ENCODE measurements at regions of chr13 and their contacts with region 1.

Region 1: GRCh38 chr13:98565726-98566565 is 11.0 kb downstream of the STK24 start:
- DNase-seq: no peak
- ATAC-seq: no peak
- H3K4me3 ChIP-seq: no peak overlapping the region
- H3K4me3 Mint-ChIP-seq: peak overlapping the region; percentile 77 to 99 (median 84)
- H3K27ac ChIP-seq: peak overlapping the region; percentile 69
- H3K27ac Mint-ChIP-seq: peak overlapping the region; percentile 84 to 97 (median 96)
- H3K4me1 ChIP-seq: peaks cover 50 to 87% of the 10 kb centered on the region in 2 donors
- H3K4me1 Mint-ChIP-seq: peaks cover 67 to 99% (median 93%) of the 10 kb centered on the region in 7 donors
- H3K27me3 ChIP-seq: no peaks in the 10 kb centered on the region
- H3K27me3 Mint-ChIP-seq: no peaks in the 10 kb centered on the region

Region 2: GRCh38 chr13:97432917-97433726 is 1132.8 kb before region 1 on chr13:
- CTCF ChIA-PET with region 1: no interaction called
- POLR2A ChIA-PET with region 1: no interaction called
- intact Hi-C with region 1: loop called in 1 of 2 experiments (anchors 2 kb)
- DNase-seq: peak; percentile 97 to 99 (median 99)
- ATAC-seq: peak; percentile 85
- H3K4me3 ChIP-seq: peak overlapping the region; percentile 93
- H3K4me3 Mint-ChIP-seq: peak overlapping the region; percentile 90 to 99 (median 96)
- H3K27ac ChIP-seq: peak overlapping the region; percentile 100
- H3K27ac Mint-ChIP-seq: peak overlapping the region; percentile 98 to 100 (median 100)
- H3K4me1 ChIP-seq: peaks cover 0 to 8% of the 10 kb centered on the region in 2 donors
- H3K4me1 Mint-ChIP-seq: peaks cover 13 to 36% (median 30%) of the 10 kb centered on the region in 7 donors
- H3K27me3 ChIP-seq: no peaks in the 10 kb centered on the region
- H3K27me3 Mint-ChIP-seq: peaks cover 0 to 11% (median 7%) of the 10 kb centered on the region in 5 donors

Region 3: DNA sequence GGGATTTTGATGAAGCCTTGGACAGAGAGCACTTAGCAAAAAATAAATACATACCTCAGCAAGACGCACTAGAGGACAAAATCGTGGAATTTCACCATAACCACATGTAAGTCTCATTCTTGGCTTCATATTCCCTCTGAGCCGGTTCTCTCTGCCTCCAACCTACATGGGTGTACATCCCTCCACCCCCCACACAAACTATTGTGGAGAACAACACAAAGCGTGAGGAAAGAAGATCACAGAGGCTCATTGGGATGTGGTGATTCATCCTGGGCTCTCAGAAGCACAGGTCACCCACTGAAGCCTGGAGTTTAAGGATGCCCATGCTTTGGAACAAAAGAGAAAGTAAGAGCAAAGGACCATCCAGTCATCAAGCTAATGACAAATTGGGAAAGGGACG is 181.2 kb before region 1 on chr13:
- CTCF ChIA-PET with region 1: no interaction called
- POLR2A ChIA-PET with region 1: no interaction called
- intact Hi-C with region 1: no loop called
- DNase-seq: no peak
- ATAC-seq: no peak
- H3K4me3 ChIP-seq: no peak overlapping the region
- H3K4me3 Mint-ChIP-seq: no peak overlapping the region
- H3K27ac ChIP-seq: no peak overlapping the region
- H3K27ac Mint-ChIP-seq: no peak overlapping the region
- H3K4me1 ChIP-seq: no peaks in the 10 kb centered on the region
- H3K4me1 Mint-ChIP-seq: no peaks in the 10 kb centered on the region
- H3K27me3 ChIP-seq: peaks cover 0 to 2% of the 10 kb centered on the region in 2 donors
- H3K27me3 Mint-ChIP-seq: peaks cover 7 to 15% (median 12%) of the 10 kb centered on the region in 5 donors

Region 4: GRCh38 chr13:98523455-98524102 is 42.4 kb before region 1 on chr13:
- CTCF ChIA-PET with region 1: no interaction called
- POLR2A ChIA-PET with region 1: no interaction called
- intact Hi-C with region 1: loop called in 1 of 2 experiments (anchors 2 kb)
- DNase-seq: no peak
- ATAC-seq: no peak
- H3K4me3 ChIP-seq: no peak overlapping the region
- H3K4me3 Mint-ChIP-seq: peak overlapping the region in 8 of 10 donors; percentile 13 to 53 (median 40)
- H3K27ac ChIP-seq: no peak overlapping the region
- H3K27ac Mint-ChIP-seq: peak overlapping the region; percentile 33 to 86 (median 75)
- H3K4me1 ChIP-seq: peaks cover 48 to 59% of the 10 kb centered on the region in 2 donors
- H3K4me1 Mint-ChIP-seq: peaks cover 64 to 96% (median 91%) of the 10 kb centered on the region in 7 donors
- H3K27me3 ChIP-seq: no peaks in the 10 kb centered on the region
- H3K27me3 Mint-ChIP-seq: no peaks in the 10 kb centered on the region

Region 5: DNA sequence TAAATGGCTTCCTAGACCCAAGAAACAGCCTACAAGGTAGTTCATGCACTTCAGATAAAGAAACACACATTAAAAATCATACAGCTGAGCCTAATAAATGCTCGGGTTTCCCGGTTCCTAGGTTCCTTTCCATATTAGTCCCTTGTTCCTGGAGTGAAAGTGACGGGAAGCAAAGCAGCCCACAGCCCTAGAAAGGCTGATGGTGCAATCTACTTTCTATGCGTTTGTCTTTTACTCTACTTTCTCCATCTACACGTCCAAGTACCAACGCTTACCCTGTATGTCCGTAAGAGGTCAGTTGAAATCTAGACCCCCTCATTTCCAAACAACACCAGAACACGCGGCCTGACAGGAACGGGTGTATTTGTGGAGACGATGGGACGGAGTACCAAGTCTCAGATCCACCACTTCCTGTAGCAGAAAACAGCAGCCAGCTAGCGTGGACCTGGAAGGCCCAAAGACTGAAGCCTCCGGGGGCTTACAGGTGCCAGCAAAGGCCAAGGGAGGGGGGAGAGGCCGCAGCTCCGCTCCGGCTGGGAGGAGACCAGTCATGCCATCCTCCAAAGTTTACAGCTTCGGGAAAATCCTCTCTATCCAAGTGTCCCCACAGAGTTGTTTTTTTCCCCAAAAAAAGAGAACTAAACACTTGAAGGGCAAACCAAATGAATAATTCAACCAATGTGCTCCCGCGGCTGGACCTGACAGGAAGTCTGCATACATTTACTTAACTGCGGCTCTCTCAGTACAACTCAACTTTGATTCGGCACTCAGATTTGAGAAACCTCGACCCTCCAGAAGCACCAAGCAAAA is 23.2 kb before region 1 on chr13:
- CTCF ChIA-PET with region 1: interaction called, 5 read pairs
- POLR2A ChIA-PET with region 1: interaction called, 7 read pairs
- intact Hi-C with region 1: loop called (anchors 2 kb)
- DNase-seq: peak in 5 of 9 donors; percentile 31 to 39 (median 37)
- ATAC-seq: peak; percentile 65
- H3K4me3 ChIP-seq: peak overlapping the region; percentile 43
- H3K4me3 Mint-ChIP-seq: peak overlapping the region; percentile 79 to 87 (median 84)
- H3K27ac ChIP-seq: peak overlapping the region; percentile 32
- H3K27ac Mint-ChIP-seq: peak overlapping the region; percentile 61 to 91 (median 82)
- H3K4me1 ChIP-seq: peaks cover 38 to 49% of the 10 kb centered on the region in 2 donors
- H3K4me1 Mint-ChIP-seq: peaks cover 75 to 97% (median 94%) of the 10 kb centered on the region in 7 donors
- H3K27me3 ChIP-seq: no peaks in the 10 kb centered on the region
- H3K27me3 Mint-ChIP-seq: no peaks in the 10 kb centered on the region